ENCODE measurements at regions of chr19 and their contacts with region 1.

Region 1: DNA sequence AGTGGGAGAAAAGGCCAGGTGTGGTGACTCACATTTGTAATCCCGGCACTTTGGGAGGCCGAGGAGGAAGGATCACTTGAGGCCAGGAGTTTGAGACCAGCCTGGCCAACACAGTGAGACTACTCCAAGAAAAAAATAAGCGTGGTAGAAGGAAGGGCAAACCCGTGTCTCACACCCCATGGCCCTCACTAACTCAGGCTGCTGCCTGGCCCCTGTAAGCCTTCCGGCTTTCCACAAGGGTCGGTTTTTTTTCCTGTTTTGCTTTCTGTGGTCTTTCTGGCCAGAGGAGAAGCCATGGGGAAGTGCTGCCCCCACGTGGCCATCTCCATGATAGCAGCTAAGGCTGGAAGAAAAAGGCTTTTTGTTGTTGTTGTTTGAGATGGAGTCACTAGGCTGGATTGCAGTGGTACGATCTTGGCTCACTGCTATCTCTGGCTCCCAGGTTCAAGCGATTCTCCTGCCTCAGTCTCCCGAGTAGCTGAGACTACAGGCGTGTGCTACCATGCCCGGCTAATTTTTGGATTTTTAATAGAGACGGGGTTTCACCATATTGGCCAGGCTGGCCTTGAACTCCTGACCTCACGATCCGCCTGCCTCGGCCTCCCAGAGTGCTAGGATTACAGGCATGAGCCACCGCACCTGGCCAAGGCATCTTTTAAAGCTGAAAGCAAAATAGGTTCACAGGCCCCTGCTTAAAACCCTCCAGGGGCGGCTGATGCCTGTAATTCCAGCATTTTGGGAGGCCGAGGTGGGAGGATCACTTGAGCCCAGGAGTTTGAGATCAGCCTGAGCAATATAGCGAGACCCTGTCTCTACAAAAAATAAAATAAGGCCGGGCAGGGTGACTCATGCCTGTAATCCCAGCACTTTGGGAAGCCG is 7.5 kb upstream of the ARHGEF18 start:
- DNase-seq: peak; percentile 85
- H3K4me3 Mint-ChIP-seq: no peak overlapping the region
- H3K27ac Mint-ChIP-seq: no peak overlapping the region
- H3K4me1 Mint-ChIP-seq: peaks cover 49% of the 10 kb centered on the region
- H3K27me3 Mint-ChIP-seq: no peaks in the 10 kb centered on the region

Region 2: GRCh38 chr19:7098701-7099596 is 242.2 kb before region 1 on chr19:
- CTCF ChIA-PET with region 1: interaction called, 19 read pairs
- POLR2A ChIA-PET with region 1: interaction called, 7 read pairs
- DNase-seq: peak; percentile 84
- H3K4me3 Mint-ChIP-seq: peak overlapping the region; percentile 80
- H3K27ac Mint-ChIP-seq: peak overlapping the region; percentile 78
- H3K4me1 Mint-ChIP-seq: peaks cover 32% of the 10 kb centered on the region
- H3K27me3 Mint-ChIP-seq: peaks cover 8% of the 10 kb centered on the region

Region 3: GRCh38 chr19:7149956-7150705 is 191.1 kb before region 1 on chr19:
- CTCF ChIA-PET with region 1: interaction called, 15 read pairs
- POLR2A ChIA-PET with region 1: no interaction called
- DNase-seq: no peak
- H3K4me3 Mint-ChIP-seq: no peak overlapping the region
- H3K27ac Mint-ChIP-seq: no peak overlapping the region
- H3K4me1 Mint-ChIP-seq: no peaks in the 10 kb centered on the region
- H3K27me3 Mint-ChIP-seq: peaks cover 2% of the 10 kb centered on the region

Region 4: DNA sequence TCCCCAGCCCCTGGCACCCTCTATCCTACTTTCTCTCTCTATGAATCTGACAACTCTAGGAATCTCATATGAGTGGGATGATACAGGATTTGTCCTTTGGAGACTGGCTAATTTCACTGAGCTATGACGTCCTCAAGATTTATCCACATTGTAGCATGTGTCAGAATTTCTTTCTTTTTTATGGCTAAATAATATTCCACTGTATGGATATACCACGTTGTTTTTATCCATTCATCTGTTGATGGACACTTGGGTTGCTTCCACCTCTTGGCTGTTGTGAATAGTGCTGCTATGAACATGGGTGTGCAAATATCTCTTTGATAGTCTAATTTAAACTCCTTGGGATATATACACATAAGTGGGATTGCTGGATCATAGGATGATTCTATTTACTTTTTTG is 23.0 kb before region 1 on chr19:
- CTCF ChIA-PET with region 1: no interaction called
- POLR2A ChIA-PET with region 1: no interaction called
- DNase-seq: no peak
- H3K4me3 Mint-ChIP-seq: no peak overlapping the region
- H3K27ac Mint-ChIP-seq: no peak overlapping the region
- H3K4me1 Mint-ChIP-seq: no peaks in the 10 kb centered on the region
- H3K27me3 Mint-ChIP-seq: peaks cover 2% of the 10 kb centered on the region

Region 5: GRCh38 chr19:7328647-7329046 is 12.6 kb before region 1 on chr19:
- CTCF ChIA-PET with region 1: interaction called, 16 read pairs
- POLR2A ChIA-PET with region 1: no interaction called
- DNase-seq: no peak
- H3K4me3 Mint-ChIP-seq: no peak overlapping the region
- H3K27ac Mint-ChIP-seq: no peak overlapping the region
- H3K4me1 Mint-ChIP-seq: no peaks in the 10 kb centered on the region
- H3K27me3 Mint-ChIP-seq: peaks cover 12% of the 10 kb centered on the region

Measured in activated CD4-positive, alpha-beta memory T cell treated with anti-CD3 and anti-CD28 coated beads, Interleukin-2, amount 10 ng/mL, durations not matched to agents 7 days and 5 days (primary cell).